ENCODE measurements at regions of chr5 and their contacts with region 1.

Region 1: GRCh38 chr5:141564216-141564692 is 54.5 kb downstream of the DIAPH1 start:
- DNase-seq: peak; percentile 56 to 62
- H3K4me3 ChIP-seq: no peak overlapping the region
- H3K27ac ChIP-seq: peak overlapping the region; percentile 26; the same call in 1 of the 2 replicates
- H3K4me1 ChIP-seq: peaks cover 0 to 7% (median 3%) of the 10 kb centered on the region in 4 experiments; a peak in 4 of 7 replicates
- H3K27me3 ChIP-seq: no peaks in the 10 kb centered on the region
- CTCF ChIP-seq: peak in 2 of 3 experiments; percentile 96; a peak in 3 of 4 replicates
- EP300 ChIP-seq: peak in 1 of 2 experiments; percentile 89; a peak in 2 of 3 replicates
- POLR2A ChIP-seq: no peak
- RAD21 ChIP-seq: peak; percentile 55 to 65

Region 2: DNA sequence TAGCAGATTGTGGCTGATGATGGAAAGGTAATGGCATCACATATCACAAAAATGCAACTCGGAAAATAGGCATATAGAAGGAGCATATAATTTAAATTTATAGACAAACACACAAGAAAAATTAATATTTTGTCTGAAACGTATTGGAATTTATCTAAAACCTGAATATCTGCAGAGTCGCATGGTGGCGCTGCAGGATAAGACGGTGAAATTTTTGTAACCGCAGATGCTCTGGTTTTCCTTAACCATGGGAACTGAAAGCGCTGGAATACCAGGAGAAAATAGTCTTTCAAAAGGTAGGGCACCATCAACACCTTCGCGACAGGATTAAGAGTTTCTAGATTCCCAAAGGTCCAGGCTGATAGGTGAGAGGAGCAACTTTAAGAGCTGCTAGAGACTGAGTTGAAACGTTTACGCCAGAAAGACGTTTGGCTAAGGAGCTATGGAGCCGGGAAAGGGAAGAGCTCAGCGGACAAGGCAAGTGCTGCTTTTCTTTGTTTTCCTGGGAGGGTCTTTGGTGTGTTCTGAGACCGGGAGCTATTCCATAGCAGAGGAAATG is 330.1 kb before region 1 on chr5:
- CTCF ChIA-PET with region 1: interaction called, 16 read pairs
- POLR2A ChIA-PET with region 1: no interaction called
- DNase-seq: no peak
- H3K4me3 ChIP-seq: no peak overlapping the region
- H3K27ac ChIP-seq: no peak overlapping the region
- H3K4me1 ChIP-seq: no peaks in the 10 kb centered on the region
- H3K27me3 ChIP-seq: no peaks in the 10 kb centered on the region
- CTCF ChIP-seq: no peak
- EP300 ChIP-seq: no peak
- POLR2A ChIP-seq: no peak
- RAD21 ChIP-seq: peak; percentile 37 to 59

Region 3: DNA sequence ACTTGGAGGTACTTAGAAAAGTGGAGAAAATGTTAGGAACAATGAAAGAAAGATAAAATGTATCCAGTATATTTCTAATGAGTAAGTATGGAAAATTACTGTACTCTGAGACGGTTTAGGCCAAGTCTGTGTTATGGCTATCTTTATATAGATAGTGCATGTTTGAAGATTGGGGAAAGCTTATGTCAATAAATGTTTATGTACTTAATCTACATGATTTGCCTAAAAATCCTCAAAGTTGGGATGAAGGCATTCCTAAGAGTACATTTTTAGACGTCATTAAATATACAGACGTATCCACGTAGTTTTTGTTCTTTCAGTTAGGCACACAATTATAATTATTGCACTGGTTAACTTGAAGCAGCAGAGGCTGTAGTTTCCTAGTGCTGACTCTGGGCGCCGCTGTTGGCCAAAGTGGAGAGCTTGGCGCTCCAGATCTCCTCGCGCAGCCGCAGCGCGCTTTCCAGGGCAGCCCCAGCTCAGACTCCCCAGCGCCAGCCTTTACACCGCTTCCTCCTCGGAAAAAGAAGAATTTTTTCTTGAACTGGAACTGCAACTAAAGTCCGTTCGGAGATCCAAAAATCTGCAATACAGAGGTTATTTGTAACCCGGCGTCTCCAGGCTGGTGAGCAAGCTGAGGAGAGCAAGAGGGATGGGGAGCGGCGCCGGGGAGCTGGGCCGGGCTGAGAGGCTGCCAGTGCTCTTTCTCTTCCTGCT is 176.9 kb before region 1 on chr5 and contains the start of gene PCDHGB4:
- CTCF ChIA-PET with region 1: interaction called, 12 read pairs
- POLR2A ChIA-PET with region 1: no interaction called
- DNase-seq: peak in 1 of 2 experiments; percentile 82
- H3K4me3 ChIP-seq: peak within 1 kb of the TSS; percentile 42 to 69 (median 44); a peak in 7 of 8 replicates
- H3K27ac ChIP-seq: no peak within 1 kb of the TSS
- H3K4me1 ChIP-seq: no peaks in the 10 kb centered on the region
- H3K27me3 ChIP-seq: no peaks in the 10 kb centered on the region; a peak in 1 of 7 replicates
- CTCF ChIP-seq: peak; percentile 56 to 66 (median 65)
- EP300 ChIP-seq: no peak
- POLR2A ChIP-seq: no peak
- RAD21 ChIP-seq: peak; percentile 59 to 67
- total RNA-seq, gene PCDHGB4: 7.8 and 9.1 TPM in 2 replicates

Region 4: GRCh38 chr5:141430332-141431113 is 133.7 kb before region 1 on chr5 and contains the start of gene PCDHGA12:
- CTCF ChIA-PET with region 1: interaction called, 10 read pairs
- POLR2A ChIA-PET with region 1: no interaction called
- DNase-seq: no peak
- H3K4me3 ChIP-seq: no peak within 1 kb of the TSS
- H3K27ac ChIP-seq: no peak within 1 kb of the TSS
- H3K4me1 ChIP-seq: no peaks in the 10 kb centered on the region
- H3K27me3 ChIP-seq: no peaks in the 10 kb centered on the region
- CTCF ChIP-seq: no peak; a peak in 1 of 4 replicates
- EP300 ChIP-seq: no peak
- POLR2A ChIP-seq: no peak
- RAD21 ChIP-seq: peak; percentile 18 to 36; a peak in 3 of 4 replicates
- total RNA-seq, gene PCDHGA12: 1.0 and 1.3 TPM in 2 replicates

Region 5: DNA sequence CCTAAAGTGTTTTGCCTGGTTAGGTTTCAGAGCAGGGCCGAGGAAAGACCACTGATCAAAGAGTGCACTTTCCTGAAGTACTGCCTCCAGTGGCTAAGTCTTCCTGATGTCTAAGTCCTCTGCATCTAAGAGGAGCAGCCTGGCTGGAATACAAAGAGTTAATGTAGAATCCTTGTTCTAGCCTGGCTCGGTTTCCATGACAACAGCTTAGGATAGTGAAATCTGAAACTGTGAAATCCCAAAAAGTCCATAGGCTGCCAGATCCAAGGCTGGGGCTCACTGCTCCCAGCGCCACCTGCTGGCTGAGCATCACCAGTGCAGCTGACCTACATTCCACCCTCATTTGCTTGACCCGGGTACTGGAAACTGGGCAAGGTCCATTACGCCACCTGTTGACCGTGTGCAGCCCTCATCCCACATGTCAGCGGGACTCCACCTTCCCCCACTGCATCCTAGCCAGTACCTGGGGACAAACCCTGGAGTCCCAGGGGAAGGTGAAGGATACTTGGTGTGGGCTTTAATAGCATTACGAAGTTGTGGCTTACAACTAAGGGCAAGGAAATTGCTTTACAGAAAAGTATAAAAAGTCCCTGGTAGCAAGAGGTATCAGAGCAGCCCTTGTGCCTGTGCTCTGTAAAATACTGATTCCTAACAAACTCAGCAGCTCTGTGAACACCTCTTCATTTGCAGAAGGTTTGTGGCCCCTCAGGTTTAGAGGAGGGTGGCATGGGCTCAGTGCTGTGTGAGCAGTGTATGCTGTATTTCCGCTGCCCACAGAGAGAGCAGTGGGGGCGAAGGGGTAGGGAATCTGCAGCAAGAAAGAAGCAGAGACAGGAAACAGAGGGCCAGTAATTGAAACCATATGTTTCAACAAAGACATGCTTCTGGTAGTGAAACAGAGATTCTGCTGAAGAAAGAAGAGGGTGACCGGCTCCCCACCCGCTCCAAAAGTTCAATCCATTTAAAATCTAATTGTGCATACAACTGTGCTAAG is 39.4 kb before region 1 on chr5:
- CTCF ChIA-PET with region 1: interaction called, 41 read pairs
- POLR2A ChIA-PET with region 1: interaction called, 6 read pairs
- DNase-seq: peak; percentile 90 to 95
- H3K4me3 ChIP-seq: no peak overlapping the region
- H3K27ac ChIP-seq: peak overlapping the region; percentile 26; the same call in 1 of the 2 replicates
- H3K4me1 ChIP-seq: peaks cover 2 to 15% (median 8%) of the 10 kb centered on the region in 4 experiments; a peak in 6 of 7 replicates
- H3K27me3 ChIP-seq: no peaks in the 10 kb centered on the region
- CTCF ChIP-seq: peak; percentile 99 to 100 (median 99)
- EP300 ChIP-seq: peak in 1 of 2 experiments; percentile 68; a peak in 1 of 3 replicates
- POLR2A ChIP-seq: no peak
- RAD21 ChIP-seq: peak; percentile 90 to 91

Region 6: DNA sequence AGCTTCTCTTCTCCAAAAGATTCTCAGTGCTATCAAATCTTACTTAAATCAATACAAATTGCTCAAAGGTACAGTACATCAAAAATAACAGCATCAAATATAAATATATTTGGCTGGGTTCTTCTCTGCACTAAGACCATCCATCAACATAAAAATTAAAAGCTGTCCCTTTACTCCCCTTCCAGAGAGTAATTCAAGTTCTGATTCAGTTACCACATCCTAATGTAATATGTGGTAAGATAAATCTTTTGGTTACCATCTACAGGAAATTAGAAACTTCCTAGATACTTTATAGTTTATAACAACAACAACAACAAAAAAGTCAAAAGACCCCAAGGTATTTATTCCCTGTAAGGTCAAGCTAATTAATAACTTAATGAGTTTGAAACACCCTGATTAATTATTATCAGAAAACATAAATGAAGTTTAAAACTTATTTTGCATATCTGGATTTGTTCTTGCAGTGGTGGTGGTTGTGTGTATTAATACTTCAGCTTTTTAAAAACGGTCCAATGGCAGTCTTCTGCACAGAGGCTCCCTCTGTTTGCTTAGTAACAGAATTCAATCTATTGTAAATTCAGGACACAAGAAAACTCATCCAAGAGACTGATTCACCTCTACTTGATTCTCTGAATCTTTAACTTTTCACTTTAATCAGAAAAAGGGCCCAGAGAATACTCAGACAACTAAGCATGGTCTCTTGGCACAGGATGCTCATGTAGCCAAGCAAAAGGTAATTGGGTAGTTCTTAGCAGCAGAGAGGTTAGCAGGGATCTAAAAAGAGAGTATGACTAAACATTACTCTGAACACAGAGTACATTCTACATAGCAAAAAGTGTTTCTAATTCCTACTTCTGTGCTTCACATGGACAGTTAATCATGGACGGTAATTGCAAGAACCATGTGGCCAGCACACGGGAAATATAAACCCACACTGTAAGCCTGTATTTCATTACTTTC is 34.4 kb after region 1 on chr5:
- CTCF ChIA-PET with region 1: interaction called, 21 read pairs
- POLR2A ChIA-PET with region 1: no interaction called
- DNase-seq: no peak
- H3K4me3 ChIP-seq: no peak overlapping the region
- H3K27ac ChIP-seq: no peak overlapping the region
- H3K4me1 ChIP-seq: no peaks in the 10 kb centered on the region; a peak in 1 of 7 replicates
- H3K27me3 ChIP-seq: no peaks in the 10 kb centered on the region
- CTCF ChIP-seq: no peak
- EP300 ChIP-seq: no peak
- POLR2A ChIP-seq: no peak
- RAD21 ChIP-seq: no peak